ENCODE measurements at regions of chr17 and their contacts with region 1.

Region 1: GRCh38 chr17:78828470-78829185 is 12.0 kb downstream of the USP36 start:
- DNase-seq: peak; percentile 19 to 72 (median 24)
- H3K4me3 ChIP-seq: no peak overlapping the region
- H3K4me3 Mint-ChIP-seq: no peak overlapping the region
- H3K27ac ChIP-seq: no peak overlapping the region
- H3K27ac Mint-ChIP-seq: peak overlapping the region in 5 of 7 donors; percentile 5 to 91 (median 73)
- H3K4me1 ChIP-seq: peaks cover 30 to 34% of the 10 kb centered on the region in 2 donors
- H3K4me1 Mint-ChIP-seq: peaks cover 35% of the 10 kb centered on the region
- H3K27me3 ChIP-seq: no peaks in the 10 kb centered on the region
- H3K27me3 Mint-ChIP-seq: peaks cover 0 to 2% (median 0%) of the 10 kb centered on the region in 3 donors
- CTCF ChIP-seq: peak; percentile 21

Region 2: DNA sequence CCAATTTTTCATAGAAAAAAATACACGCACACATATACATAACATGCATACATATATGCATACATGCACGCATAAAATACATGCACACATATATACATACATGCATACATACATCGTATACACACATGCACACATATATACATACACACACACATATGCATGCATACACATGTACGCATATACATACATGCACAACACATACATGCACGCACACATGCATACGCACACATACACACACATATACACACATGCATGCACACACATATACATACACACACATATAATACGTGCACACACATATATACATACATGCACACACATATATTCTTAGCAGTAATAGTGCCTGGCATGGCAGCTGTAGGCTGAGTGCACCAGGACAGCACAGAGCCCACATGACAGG is 12.9 kb before region 1 on chr17:
- intact Hi-C with region 1: loop called in 1 of 2 experiments (anchors 2 kb)
- DNase-seq: no peak
- H3K4me3 ChIP-seq: no peak overlapping the region
- H3K4me3 Mint-ChIP-seq: no peak overlapping the region
- H3K27ac ChIP-seq: no peak overlapping the region
- H3K27ac Mint-ChIP-seq: no peak overlapping the region
- H3K4me1 ChIP-seq: no peaks in the 10 kb centered on the region
- H3K4me1 Mint-ChIP-seq: peaks cover 7% of the 10 kb centered on the region
- H3K27me3 ChIP-seq: no peaks in the 10 kb centered on the region
- H3K27me3 Mint-ChIP-seq: peaks cover 0 to 2% (median 0%) of the 10 kb centered on the region in 3 donors
- CTCF ChIP-seq: no peak

Region 3: GRCh38 chr17:78852709-78853121 is 24.1 kb after region 1 on chr17:
- intact Hi-C with region 1: no loop called
- DNase-seq: no peak
- H3K4me3 ChIP-seq: no peak overlapping the region
- H3K4me3 Mint-ChIP-seq: no peak overlapping the region
- H3K27ac ChIP-seq: no peak overlapping the region
- H3K27ac Mint-ChIP-seq: peak overlapping the region in 3 of 7 donors; percentile 7 to 64 (median 57)
- H3K4me1 ChIP-seq: no peaks in the 10 kb centered on the region
- H3K4me1 Mint-ChIP-seq: no peaks in the 10 kb centered on the region
- H3K27me3 ChIP-seq: no peaks in the 10 kb centered on the region
- H3K27me3 Mint-ChIP-seq: peaks cover 1 to 3% (median 2%) of the 10 kb centered on the region in 3 donors
- CTCF ChIP-seq: no peak

Measured in CD14-positive monocyte (primary cell).